ENCODE measurements at regions of chr5 and their contacts with region 1.

Region 1: DNA sequence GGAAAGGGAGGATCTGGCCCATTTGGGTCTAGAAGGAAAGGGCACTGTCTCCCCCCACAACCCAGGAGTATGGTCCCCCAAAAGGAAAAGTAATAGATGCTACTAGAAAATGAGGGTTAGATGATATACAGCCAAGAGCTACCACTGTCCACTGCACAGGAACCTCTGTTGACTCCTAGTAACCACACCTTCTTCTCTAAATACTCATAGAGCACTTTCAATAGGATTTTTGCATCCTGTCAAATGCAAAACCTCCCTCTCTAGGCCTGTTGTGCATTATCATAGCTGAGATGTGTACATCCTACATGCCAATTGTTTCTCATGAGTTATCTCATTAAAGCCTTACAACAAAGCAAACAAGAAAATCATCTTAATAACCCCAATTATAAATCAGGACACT is 66.8 kb downstream of the THBS4 start:
- DNase-seq: no peak
- ATAC-seq: no peak
- H3K4me3 Mint-ChIP-seq: peak overlapping the region in 5 of 10 donors; percentile 15 to 69 (median 35)
- H3K27ac Mint-ChIP-seq: peak overlapping the region in 8 of 10 donors; percentile 2 to 92 (median 72)
- H3K4me1 Mint-ChIP-seq: peaks cover 45 to 79% (median 59%) of the 10 kb centered on the region in 4 donors
- H3K27me3 Mint-ChIP-seq: no peaks in the 10 kb centered on the region

Region 2: GRCh38 chr5:79947567-79947966 is 154.4 kb before region 1 on chr5:
- POLR2A ChIA-PET with region 1: no interaction called
- DNase-seq: no peak
- ATAC-seq: no peak
- H3K4me3 Mint-ChIP-seq: no peak overlapping the region
- H3K27ac Mint-ChIP-seq: no peak overlapping the region
- H3K4me1 Mint-ChIP-seq: no peaks in the 10 kb centered on the region
- H3K27me3 Mint-ChIP-seq: peaks cover 0 to 3% (median 2%) of the 10 kb centered on the region in 5 donors

Region 3: DNA sequence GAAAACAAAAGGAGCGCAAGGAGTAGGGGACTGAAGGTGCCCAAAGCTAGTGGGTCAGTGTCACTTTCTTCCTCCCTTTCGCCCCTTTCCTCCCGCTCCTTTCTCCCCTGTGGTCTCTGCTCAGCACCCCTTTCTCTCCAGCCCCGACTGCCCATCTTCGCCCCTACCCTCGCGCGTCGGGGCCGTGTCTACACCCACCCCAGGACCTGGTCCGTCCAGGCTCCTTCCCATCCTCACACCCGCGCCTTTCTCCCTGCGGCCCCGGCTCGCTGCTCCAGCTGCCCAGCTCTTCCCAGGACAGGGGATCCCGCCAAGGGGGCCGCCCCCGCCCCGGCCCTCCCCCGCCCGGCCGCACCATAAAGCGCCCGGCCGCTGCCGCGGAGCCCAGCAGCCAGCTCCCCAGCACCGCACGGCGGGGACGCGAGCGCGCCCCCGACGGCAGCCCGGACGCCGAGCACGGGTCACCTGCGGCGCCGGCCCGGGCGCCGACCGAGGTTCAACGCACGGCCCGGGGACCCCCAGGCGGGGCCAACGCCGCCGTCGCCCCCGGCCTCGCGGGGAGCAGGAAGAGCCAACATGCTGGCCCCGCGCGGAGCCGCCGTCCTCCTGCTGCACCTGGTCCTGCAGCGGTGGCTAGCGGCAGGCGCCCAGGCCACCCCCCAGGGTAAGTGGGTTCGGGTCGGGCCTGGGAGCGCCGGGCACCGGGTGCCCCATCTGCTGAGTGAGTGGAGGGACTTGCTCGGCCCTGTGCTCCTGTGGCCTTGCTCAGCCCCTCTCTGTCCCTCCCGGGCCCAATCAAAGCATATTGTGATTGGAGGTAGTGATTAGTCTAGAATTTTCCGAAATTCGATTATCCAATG is 66.8 kb before region 1 on chr5 and contains the start of gene THBS4:
- POLR2A ChIA-PET with region 1: no interaction called
- DNase-seq: peak in 2 of 10 donors; percentile 9 to 15
- ATAC-seq: peak; percentile 51 to 65
- H3K4me3 Mint-ChIP-seq: peak within 1 kb of the TSS; percentile 50 to 84 (median 67)
- H3K27ac Mint-ChIP-seq: no peak within 1 kb of the TSS
- H3K4me1 Mint-ChIP-seq: peaks cover 5 to 20% (median 14%) of the 10 kb centered on the region in 4 donors
- H3K27me3 Mint-ChIP-seq: peaks cover 30 to 64% (median 53%) of the 10 kb centered on the region in 5 donors
- polyA plus RNA-seq, gene THBS4: 0.68 TPM in 1 of 3 donors, not detected in the others

Region 4: GRCh38 chr5:80069918-80070318 is 32.1 kb before region 1 on chr5:
- POLR2A ChIA-PET with region 1: no interaction called
- DNase-seq: no peak
- ATAC-seq: no peak
- H3K4me3 Mint-ChIP-seq: no peak overlapping the region
- H3K27ac Mint-ChIP-seq: peak overlapping the region in 4 of 10 donors; percentile 43 to 86 (median 54)
- H3K4me1 Mint-ChIP-seq: peaks cover 0 to 15% (median 0%) of the 10 kb centered on the region in 4 donors
- H3K27me3 Mint-ChIP-seq: no peaks in the 10 kb centered on the region

Region 5: GRCh38 chr5:80125962-80126480 is 24.0 kb after region 1 on chr5:
- POLR2A ChIA-PET with region 1: interaction called, 12 read pairs
- DNase-seq: peak in 1 of 10 donors; percentile 45
- ATAC-seq: peak; percentile 76 to 79
- H3K4me3 Mint-ChIP-seq: peak overlapping the region in 8 of 10 donors; percentile 46 to 76 (median 60)
- H3K27ac Mint-ChIP-seq: peak overlapping the region; percentile 29 to 96 (median 75)
- H3K4me1 Mint-ChIP-seq: peaks cover 35 to 75% (median 65%) of the 10 kb centered on the region in 4 donors
- H3K27me3 Mint-ChIP-seq: no peaks in the 10 kb centered on the region

Region 6: GRCh38 chr5:80407735-80408482 is 305.9 kb after region 1 on chr5 and contains the start of gene ZFYVE16:
- POLR2A ChIA-PET with region 1: no interaction called
- DNase-seq: peak; percentile 92 to 98 (median 96)
- ATAC-seq: peak; percentile 87 to 88
- H3K4me3 Mint-ChIP-seq: peak within 1 kb of the TSS; percentile 87 to 99 (median 98)
- H3K27ac Mint-ChIP-seq: peak within 1 kb of the TSS; percentile 98 to 100 (median 98)
- H3K4me1 Mint-ChIP-seq: peaks cover 6 to 33% (median 24%) of the 10 kb centered on the region in 4 donors
- H3K27me3 Mint-ChIP-seq: no peaks in the 10 kb centered on the region
- polyA plus RNA-seq, gene ZFYVE16: 1.7 to 4.1 (median 2.5) TPM